A549 (cell line): ENCODE measurements at regions of chr5 and their contacts with region 1.

Region 1: GRCh38 chr5:76256116-76256889 is 146.8 kb upstream of the IQGAP2 start:
- DNase-seq: peak; percentile 41 to 79
- ATAC-seq: peak; percentile 98 to 99
- H3K4me3 ChIP-seq: no peak overlapping the region
- H3K27ac ChIP-seq: no peak overlapping the region
- H3K4me1 ChIP-seq: no peaks in the 10 kb centered on the region
- CTCF ChIP-seq: peak; percentile 87
- EP300 ChIP-seq: no peak
- POLR2A ChIP-seq: no peak
- RAD21 ChIP-seq: peak; percentile 92 to 93

Region 2: DNA sequence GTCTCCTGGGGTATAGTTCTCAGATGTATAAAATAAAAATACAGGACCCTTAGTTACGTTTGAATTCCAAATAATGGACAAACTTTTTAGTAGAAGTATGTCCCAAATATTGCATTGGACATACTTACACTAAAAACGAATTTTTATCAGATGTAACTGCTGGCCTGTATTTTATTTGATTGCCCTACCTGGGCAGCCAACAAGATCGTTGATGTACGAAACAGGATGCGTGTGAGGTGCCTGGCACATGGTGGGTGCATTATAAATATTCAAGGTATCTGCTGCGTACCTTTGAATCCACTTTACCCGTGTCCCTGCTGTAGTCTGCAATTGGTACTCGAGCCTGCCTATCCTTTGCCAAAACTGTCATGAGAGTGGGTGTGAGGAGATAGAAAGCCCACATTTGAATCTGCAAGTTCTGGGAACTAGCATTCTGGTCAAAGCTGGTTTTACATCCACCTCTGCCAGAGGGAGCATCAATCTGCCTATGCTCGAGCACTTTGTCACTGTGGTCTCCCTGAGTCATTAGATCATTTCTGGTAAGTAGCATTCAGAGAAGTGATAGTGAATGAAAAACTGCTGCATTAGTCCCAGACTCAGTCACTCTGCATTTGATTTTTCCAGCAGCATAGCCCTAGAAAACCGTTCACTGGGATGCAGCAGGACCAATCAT is 13.1 kb after region 1 on chr5:
- CTCF ChIA-PET with region 1: interaction called, 33 read pairs
- POLR2A ChIA-PET with region 1: no interaction called
- DNase-seq: no peak
- ATAC-seq: no peak
- H3K4me3 ChIP-seq: no peak overlapping the region
- H3K27ac ChIP-seq: no peak overlapping the region
- H3K4me1 ChIP-seq: no peaks in the 10 kb centered on the region
- CTCF ChIP-seq: no peak
- EP300 ChIP-seq: no peak
- POLR2A ChIP-seq: no peak
- RAD21 ChIP-seq: no peak